Activated CD4-positive, alpha-beta memory T cell treated with anti-CD3 and anti-CD28 coated beads for 36 hours (primary cell): ENCODE measurements at regions of chr3 and their contacts with region 1.

Region 1: DNA sequence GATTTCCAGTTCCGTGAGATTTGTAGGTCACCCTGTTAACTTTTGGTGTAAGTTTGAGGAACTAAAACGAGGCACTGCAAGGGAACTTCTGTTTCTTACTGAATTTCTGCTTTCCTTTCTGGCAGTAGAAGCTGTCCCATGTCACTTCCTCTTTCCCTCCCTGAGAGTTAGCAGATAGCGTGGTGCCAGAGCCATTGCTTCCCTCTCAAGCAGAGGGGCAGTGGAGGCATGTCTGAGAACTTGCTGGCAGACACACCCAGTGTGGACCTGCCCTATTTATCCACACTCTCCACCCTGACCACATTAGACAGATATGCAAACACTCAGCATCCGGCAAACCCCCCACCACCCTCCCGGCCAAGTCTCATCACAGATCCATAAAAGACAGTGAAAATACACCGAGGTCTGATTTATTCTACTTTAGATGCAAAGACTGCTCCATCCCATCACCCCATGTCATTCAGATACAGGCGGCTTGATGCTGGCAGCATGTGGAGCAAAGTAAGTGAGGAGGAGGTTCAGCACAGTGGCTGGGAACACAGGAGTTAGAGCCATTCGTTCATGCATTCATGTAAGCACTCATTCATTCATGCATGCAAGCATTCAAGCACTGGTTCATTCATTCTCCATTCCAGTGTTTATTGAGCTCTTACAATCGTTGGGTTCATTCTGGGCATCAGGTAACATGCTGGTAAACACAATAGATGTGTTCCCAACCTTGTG is 324.7 kb downstream of the SHQ1 start:
- DNase-seq: no peak
- H3K4me3 Mint-ChIP-seq: no peak overlapping the region
- H3K27ac Mint-ChIP-seq: no peak overlapping the region
- H3K4me1 Mint-ChIP-seq: peaks cover 44% of the 10 kb centered on the region
- H3K27me3 Mint-ChIP-seq: peaks cover 3% of the 10 kb centered on the region

Region 2: DNA sequence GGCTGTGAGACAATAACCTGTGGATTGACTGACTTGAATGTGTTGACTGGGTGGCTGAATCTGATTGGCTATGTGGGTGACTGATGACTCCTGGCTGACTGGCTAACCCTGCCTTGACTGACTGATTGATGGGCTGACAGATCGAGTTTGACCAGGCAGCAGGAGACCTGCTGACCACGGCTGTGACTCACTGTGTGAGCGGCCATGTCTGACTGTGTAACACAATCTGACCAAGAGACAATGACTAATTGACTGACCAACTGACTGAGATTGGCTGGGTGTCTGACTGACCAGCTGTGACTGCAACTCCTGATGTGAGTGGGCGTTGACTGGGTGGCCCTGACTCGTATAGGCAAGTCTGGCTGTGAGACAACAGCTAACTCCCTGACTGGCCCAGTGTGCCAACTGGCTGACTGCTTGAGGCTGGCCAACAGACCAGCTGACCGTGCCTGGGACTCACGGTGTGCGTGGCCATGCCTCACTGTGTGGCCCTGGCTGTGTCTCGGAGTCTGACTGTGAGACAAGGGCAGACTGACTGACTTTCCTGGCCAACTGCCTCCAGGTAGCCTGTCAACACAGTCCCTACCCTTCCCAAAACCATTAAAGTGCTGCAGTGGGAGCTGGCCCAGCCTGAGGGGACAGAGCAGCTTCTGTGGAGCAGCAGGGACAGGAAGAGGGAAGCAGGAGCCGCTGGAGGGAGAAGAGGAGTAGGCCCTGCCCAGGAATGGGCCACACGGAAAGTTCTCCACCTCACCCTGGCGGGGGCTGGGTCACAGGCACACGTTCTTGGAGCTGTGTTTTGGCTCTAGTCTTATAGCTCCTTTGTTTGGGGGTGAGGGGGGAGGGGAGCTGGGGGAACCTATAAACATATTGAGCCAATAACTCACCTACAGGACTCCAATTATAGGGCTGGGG is 184.2 kb before region 1 on chr3:
- CTCF ChIA-PET with region 1: no interaction called
- POLR2A ChIA-PET with region 1: no interaction called
- intact Hi-C with region 1: loop called (anchors 1 kb)
- DNase-seq: no peak
- H3K4me3 Mint-ChIP-seq: no peak overlapping the region
- H3K27ac Mint-ChIP-seq: no peak overlapping the region
- H3K4me1 Mint-ChIP-seq: peaks cover 27% of the 10 kb centered on the region
- H3K27me3 Mint-ChIP-seq: no peaks in the 10 kb centered on the region

Region 3: DNA sequence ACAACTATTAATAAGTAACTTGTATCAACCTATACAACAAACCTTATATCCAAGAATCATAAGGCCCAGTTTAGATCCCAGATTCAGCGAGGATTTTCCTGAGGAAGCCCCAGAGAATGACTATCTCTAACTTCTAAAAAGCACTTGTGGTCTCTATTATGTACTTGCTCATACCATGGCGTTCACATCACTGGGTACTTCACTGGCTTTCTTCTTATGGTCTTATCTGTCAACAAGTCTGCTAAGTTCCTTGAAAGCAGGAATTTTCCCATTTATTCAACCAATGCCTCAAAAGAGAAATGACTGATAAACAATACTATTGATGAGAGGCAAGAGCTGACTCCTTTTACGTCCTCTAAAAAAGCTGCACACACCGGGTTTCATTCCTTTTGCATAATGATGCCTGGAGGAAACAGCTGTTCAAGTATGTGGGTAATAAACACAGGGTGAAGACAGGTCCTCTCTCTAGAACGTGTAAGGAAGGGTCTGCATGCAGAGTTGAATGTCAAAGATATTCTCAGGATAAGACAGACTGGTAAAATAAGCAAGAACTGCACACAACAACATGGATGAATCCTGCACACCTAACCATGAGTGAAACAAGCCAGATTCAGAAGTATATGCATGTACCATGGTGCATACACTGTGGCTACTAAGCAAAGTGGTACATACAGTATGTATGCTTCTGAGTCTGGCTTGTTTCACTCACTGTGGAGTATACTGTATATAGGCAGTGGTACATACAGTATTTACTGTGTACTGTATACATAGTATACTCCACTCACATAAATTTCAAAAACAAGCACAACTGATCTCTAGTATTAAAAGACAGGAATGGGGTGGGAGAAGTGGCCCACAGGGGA is 84.0 kb before region 1 on chr3:
- CTCF ChIA-PET with region 1: no interaction called
- POLR2A ChIA-PET with region 1: interaction called, 3 read pairs
- intact Hi-C with region 1: loop called (anchors 1 kb)
- DNase-seq: no peak
- H3K4me3 Mint-ChIP-seq: no peak overlapping the region
- H3K27ac Mint-ChIP-seq: no peak overlapping the region
- H3K4me1 Mint-ChIP-seq: peaks cover 88% of the 10 kb centered on the region
- H3K27me3 Mint-ChIP-seq: no peaks in the 10 kb centered on the region

Region 4: DNA sequence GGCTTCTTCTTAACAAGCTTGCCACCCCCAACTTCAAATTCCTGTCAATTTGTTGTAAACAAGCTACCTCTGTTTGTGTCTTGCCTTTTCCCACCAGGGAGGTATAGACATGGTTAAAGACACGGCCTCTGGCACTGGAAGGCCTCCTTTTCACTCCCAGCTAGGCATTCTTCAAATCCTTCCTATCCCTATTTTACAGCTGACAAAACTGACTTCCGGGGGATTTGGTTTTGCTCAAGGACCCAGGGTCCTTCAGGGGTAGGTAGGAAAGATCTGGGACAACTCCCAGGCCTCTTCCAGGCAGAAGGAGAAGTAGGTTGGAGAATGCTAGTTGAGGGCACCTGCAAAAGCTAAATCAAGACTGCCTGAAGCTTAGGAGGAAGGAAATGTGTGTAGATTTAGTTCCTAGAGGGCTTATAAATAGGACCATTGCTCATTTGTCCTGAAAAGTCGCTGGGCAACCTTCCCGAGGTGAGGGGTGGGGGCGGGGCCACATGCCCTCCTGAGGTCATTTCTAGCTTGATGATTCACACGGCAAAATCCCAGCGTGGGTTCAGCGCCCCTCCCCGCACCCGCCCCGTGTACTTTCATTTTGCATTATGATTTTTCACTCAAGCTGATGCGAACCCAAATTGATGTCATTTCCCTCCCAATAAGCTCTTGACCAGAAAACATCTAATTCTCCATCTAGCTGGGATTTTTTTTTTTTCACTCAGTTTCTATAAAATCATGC is 40.8 kb before region 1 on chr3:
- CTCF ChIA-PET with region 1: interaction called, 7 read pairs
- POLR2A ChIA-PET with region 1: interaction called, 18 read pairs
- intact Hi-C with region 1: loop called (anchors 1 kb)
- DNase-seq: peak; percentile 95
- H3K4me3 Mint-ChIP-seq: peak overlapping the region; percentile 42
- H3K27ac Mint-ChIP-seq: peak overlapping the region; percentile 91
- H3K4me1 Mint-ChIP-seq: peaks cover 79% of the 10 kb centered on the region
- H3K27me3 Mint-ChIP-seq: no peaks in the 10 kb centered on the region

Region 5: GRCh38 chr3:72818092-72818773 is 294.6 kb after region 1 on chr3:
- CTCF ChIA-PET with region 1: no interaction called
- POLR2A ChIA-PET with region 1: interaction called, 4 read pairs
- intact Hi-C with region 1: loop called (anchors 5 kb)
- DNase-seq: no peak
- H3K4me3 Mint-ChIP-seq: no peak overlapping the region
- H3K27ac Mint-ChIP-seq: no peak overlapping the region
- H3K4me1 Mint-ChIP-seq: peaks cover 22% of the 10 kb centered on the region
- H3K27me3 Mint-ChIP-seq: no peaks in the 10 kb centered on the region